B cell (primary cell): ENCODE measurements at regions of chr7 and their contacts with region 1.

Region 1: GRCh38 chr7:103344453-103345149 is at the start of gene DNAJC2:
- DNase-seq: peak; percentile 91
- ATAC-seq: peak; percentile 88
- H3K4me3 ChIP-seq: peak within 1 kb of the TSS; percentile 76 to 93 (median 83)
- H3K4me3 Mint-ChIP-seq: peak within 1 kb of the TSS; percentile 97
- H3K27ac ChIP-seq: peak within 1 kb of the TSS; percentile 66 to 93
- H3K27ac Mint-ChIP-seq: peak within 1 kb of the TSS; percentile 98
- H3K4me1 ChIP-seq: peaks cover 22 to 30% of the 10 kb centered on the region in 2 donors
- H3K4me1 Mint-ChIP-seq: peaks cover 58% of the 10 kb centered on the region
- H3K27me3 ChIP-seq: no peaks in the 10 kb centered on the region
- H3K27me3 Mint-ChIP-seq: no peaks in the 10 kb centered on the region
- CTCF ChIP-seq: no peak
- total RNA-seq, gene DNAJC2: 38.6 and 44.9 TPM in 2 replicates

Region 2: GRCh38 chr7:103074519-103075336 is 269.9 kb before region 1 on chr7 and contains the starts of genes ARMC10 and FBXL13:
- CTCF ChIA-PET with region 1: no interaction called
- POLR2A ChIA-PET with region 1: no interaction called
- intact Hi-C with region 1: loop called (anchors 5 kb)
- DNase-seq: peak; percentile 96
- ATAC-seq: peak; percentile 82
- H3K4me3 ChIP-seq: peak within 1 kb of the TSS; percentile 58 to 92 (median 79)
- H3K4me3 Mint-ChIP-seq: peak within 1 kb of the TSS; percentile 97
- H3K27ac ChIP-seq: peak within 1 kb of the TSS; percentile 45 to 82
- H3K27ac Mint-ChIP-seq: peak within 1 kb of the TSS; percentile 96
- H3K4me1 ChIP-seq: peaks cover 13 to 24% of the 10 kb centered on the region in 2 donors
- H3K4me1 Mint-ChIP-seq: peaks cover 32% of the 10 kb centered on the region
- H3K27me3 ChIP-seq: no peaks in the 10 kb centered on the region
- H3K27me3 Mint-ChIP-seq: no peaks in the 10 kb centered on the region
- CTCF ChIP-seq: peak; percentile 39
- total RNA-seq, gene ARMC10: 24.2 and 28.0 TPM in 2 replicates
- total RNA-seq, gene FBXL13: 2.4 and 4.0 TPM in 2 replicates

Region 3: GRCh38 chr7:103148994-103149807 is 195.4 kb before region 1 on chr7 and contains the start of gene NAPEPLD:
- CTCF ChIA-PET with region 1: no interaction called
- POLR2A ChIA-PET with region 1: no interaction called
- intact Hi-C with region 1: loop called (anchors 5 kb)
- DNase-seq: peak; percentile 93
- ATAC-seq: peak; percentile 87
- H3K4me3 ChIP-seq: peak within 1 kb of the TSS; percentile 90 to 100 (median 98)
- H3K4me3 Mint-ChIP-seq: peak within 1 kb of the TSS; percentile 97
- H3K27ac ChIP-seq: peak within 1 kb of the TSS; percentile 82 to 84
- H3K27ac Mint-ChIP-seq: peak within 1 kb of the TSS; percentile 97
- H3K4me1 ChIP-seq: peaks cover 18 to 19% of the 10 kb centered on the region in 2 donors
- H3K4me1 Mint-ChIP-seq: peaks cover 40% of the 10 kb centered on the region
- H3K27me3 ChIP-seq: no peaks in the 10 kb centered on the region
- H3K27me3 Mint-ChIP-seq: no peaks in the 10 kb centered on the region
- CTCF ChIP-seq: no peak
- total RNA-seq, gene NAPEPLD: 20.7 and 22.8 TPM in 2 replicates

Region 4: DNA sequence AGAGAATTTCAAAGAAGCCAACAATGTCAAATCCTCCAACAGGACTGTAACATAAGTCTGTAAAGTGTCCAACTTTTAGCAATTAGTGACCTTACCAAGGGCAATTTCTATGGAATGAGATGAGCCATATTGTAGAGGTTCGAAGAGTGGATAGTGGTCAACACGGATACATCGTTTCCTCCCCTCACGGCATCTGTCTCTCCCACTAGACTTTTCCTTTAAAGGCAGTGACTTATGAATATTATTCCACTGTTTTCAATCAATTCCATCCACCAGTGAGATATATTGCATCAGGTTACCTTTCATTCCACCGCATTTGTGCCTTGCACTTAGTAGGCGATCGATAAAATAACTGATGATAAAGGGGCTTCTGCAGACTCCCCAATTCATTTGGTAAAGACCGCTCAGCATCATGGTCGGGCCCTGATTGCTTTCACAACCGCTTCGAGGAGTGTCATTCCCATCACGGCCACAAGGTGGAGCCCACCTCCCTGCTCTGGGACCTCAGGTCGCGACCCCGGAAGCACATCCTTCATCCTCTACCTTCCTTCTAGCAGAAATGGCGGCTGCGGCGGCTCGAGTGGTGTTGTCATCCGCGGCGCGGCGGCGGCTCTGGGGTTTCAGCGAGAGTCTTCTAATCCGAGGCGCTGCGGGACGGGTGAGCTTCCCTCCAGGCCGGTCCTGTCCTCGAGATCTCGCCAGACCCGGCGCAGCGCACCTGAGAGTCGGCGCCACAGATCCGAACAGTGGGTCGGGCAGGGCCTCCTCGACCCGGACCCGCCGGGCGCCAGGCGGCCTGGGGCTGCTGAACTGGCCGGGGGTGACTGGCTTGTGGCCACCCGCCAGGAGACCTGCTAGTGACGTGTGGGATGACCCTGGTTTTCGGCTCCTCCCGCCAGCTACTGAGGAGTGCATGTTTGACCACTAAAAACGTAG is 47.4 kb before region 1 on chr7 and contains the start of gene PMPCB:
- CTCF ChIA-PET with region 1: interaction called, 3 read pairs
- POLR2A ChIA-PET with region 1: no interaction called
- intact Hi-C with region 1: loop called (anchors 1 kb)
- DNase-seq: peak; percentile 95
- ATAC-seq: peak; percentile 100
- H3K4me3 ChIP-seq: peak within 1 kb of the TSS; percentile 79 to 98 (median 88)
- H3K4me3 Mint-ChIP-seq: peak within 1 kb of the TSS; percentile 90
- H3K27ac ChIP-seq: peak within 1 kb of the TSS; percentile 86 to 94
- H3K27ac Mint-ChIP-seq: peak within 1 kb of the TSS; percentile 91
- H3K4me1 ChIP-seq: peaks cover 17 to 19% of the 10 kb centered on the region in 2 donors
- H3K4me1 Mint-ChIP-seq: peaks cover 22% of the 10 kb centered on the region
- H3K27me3 ChIP-seq: no peaks in the 10 kb centered on the region
- H3K27me3 Mint-ChIP-seq: peaks cover 3% of the 10 kb centered on the region
- CTCF ChIP-seq: peak; percentile 85
- total RNA-seq, gene PMPCB: 70.9 and 72.8 TPM in 2 replicates

Region 5: GRCh38 chr7:103325744-103326143 is 18.9 kb before region 1 on chr7:
- CTCF ChIA-PET with region 1: no interaction called
- POLR2A ChIA-PET with region 1: no interaction called
- intact Hi-C with region 1: no loop called
- DNase-seq: no peak
- ATAC-seq: no peak
- H3K4me3 ChIP-seq: no peak overlapping the region
- H3K4me3 Mint-ChIP-seq: no peak overlapping the region
- H3K27ac ChIP-seq: no peak overlapping the region
- H3K27ac Mint-ChIP-seq: no peak overlapping the region
- H3K4me1 ChIP-seq: no peaks in the 10 kb centered on the region
- H3K4me1 Mint-ChIP-seq: no peaks in the 10 kb centered on the region
- H3K27me3 ChIP-seq: no peaks in the 10 kb centered on the region
- H3K27me3 Mint-ChIP-seq: no peaks in the 10 kb centered on the region
- CTCF ChIP-seq: no peak

Region 6: DNA sequence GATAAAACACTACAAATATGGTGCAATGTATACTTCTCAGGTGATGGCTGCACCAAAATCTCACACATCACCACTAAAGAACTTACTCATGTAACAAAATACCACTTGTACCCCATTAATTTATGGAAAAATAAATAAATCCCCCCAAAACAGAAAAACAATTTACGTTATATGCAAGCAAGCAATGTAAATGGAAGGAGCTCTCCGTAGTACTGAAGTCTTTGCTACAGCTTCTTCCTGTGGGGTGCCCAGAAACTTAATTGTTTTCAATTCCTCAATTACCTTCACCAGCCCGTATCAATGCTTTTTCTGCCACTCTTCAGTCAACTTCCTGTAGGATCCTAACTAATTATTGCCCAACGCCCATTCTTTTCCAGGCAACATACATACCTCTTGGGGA is 506.8 kb after region 1 on chr7:
- CTCF ChIA-PET with region 1: no interaction called
- POLR2A ChIA-PET with region 1: no interaction called
- intact Hi-C with region 1: no loop called
- DNase-seq: no peak
- ATAC-seq: no peak
- H3K4me3 ChIP-seq: no peak overlapping the region
- H3K4me3 Mint-ChIP-seq: no peak overlapping the region
- H3K27ac ChIP-seq: no peak overlapping the region
- H3K27ac Mint-ChIP-seq: no peak overlapping the region
- H3K4me1 ChIP-seq: no peaks in the 10 kb centered on the region
- H3K4me1 Mint-ChIP-seq: no peaks in the 10 kb centered on the region
- H3K27me3 ChIP-seq: no peaks in the 10 kb centered on the region
- H3K27me3 Mint-ChIP-seq: peaks cover 4% of the 10 kb centered on the region
- CTCF ChIP-seq: no peak

Region 7: GRCh38 chr7:104207731-104208420 is 863.3 kb after region 1 on chr7 and contains the start of gene ORC5:
- CTCF ChIA-PET with region 1: no interaction called
- POLR2A ChIA-PET with region 1: no interaction called
- intact Hi-C with region 1: loop called (anchors 10 kb)
- DNase-seq: peak; percentile 84
- ATAC-seq: peak; percentile 100
- H3K4me3 ChIP-seq: peak within 1 kb of the TSS; percentile 86 to 98 (median 90)
- H3K4me3 Mint-ChIP-seq: peak within 1 kb of the TSS; percentile 95
- H3K27ac ChIP-seq: peak within 1 kb of the TSS; percentile 55 to 83
- H3K27ac Mint-ChIP-seq: peak within 1 kb of the TSS; percentile 90
- H3K4me1 ChIP-seq: peaks cover 12 to 14% of the 10 kb centered on the region in 2 donors
- H3K4me1 Mint-ChIP-seq: peaks cover 28% of the 10 kb centered on the region
- H3K27me3 ChIP-seq: no peaks in the 10 kb centered on the region
- H3K27me3 Mint-ChIP-seq: peaks cover 14% of the 10 kb centered on the region
- CTCF ChIP-seq: no peak
- total RNA-seq, gene ORC5: 18.1 and 20.2 TPM in 2 replicates